ENCODE measurements at regions of chr5 and their contacts with region 1.

Region 1: GRCh38 chr5:78509884-78510769 is 138.4 kb downstream of the LHFPL2 start:
- DNase-seq: peak; percentile 43 to 68
- ATAC-seq: peak; percentile 70 to 73
- H3K4me3 ChIP-seq: peak overlapping the region; percentile 53 to 65 (median 54)
- H3K27ac ChIP-seq: peak overlapping the region; percentile 42 to 72 (median 56)
- H3K4me1 ChIP-seq: peaks cover 26 to 34% of the 10 kb centered on the region in 2 donors
- H3K27me3 ChIP-seq: no peaks in the 10 kb centered on the region
- CTCF ChIP-seq: peak in 1 of 5 experiments; percentile 19
- POLR2A ChIP-seq: peak; percentile 16

Region 2: DNA sequence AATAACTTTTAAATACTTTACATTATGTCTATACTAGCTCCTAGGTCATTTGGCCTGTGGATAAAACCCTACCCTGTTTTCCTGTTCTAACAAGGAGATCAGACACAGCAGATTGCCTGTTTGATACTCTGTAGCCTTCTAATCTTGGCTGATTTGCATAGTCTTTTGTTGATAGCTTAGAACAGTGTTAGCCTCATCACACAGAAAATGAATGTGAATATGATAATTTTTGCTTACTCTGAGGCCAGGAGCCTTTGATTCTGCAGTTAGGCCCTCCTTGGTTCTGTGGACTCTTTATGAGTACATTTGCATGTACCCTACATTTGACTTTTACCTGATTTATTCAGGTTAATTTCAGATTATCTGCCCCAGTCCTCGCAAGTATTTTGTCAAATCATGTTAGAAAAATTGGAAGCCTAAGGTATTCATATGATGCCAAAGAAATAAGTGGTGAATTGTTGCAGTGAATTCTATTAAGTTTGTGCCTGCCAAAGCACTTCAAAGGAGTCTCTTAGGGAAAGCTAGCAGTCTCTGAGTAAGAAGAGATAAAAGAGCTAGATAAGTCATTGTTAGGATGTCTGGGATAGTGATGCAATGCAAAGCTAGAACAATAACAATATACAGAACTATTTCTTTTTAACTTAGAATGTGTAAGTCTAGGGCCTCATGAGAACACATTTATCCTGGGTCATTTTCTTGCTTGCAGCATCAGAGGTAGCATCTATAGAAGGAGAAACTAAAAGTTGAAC is 93.3 kb before region 1 on chr5:
- in situ Hi-C with region 1: no loop called
- intact Hi-C with region 1: no loop called
- DNase-seq: no peak
- ATAC-seq: no peak
- H3K4me3 ChIP-seq: no peak overlapping the region
- H3K27ac ChIP-seq: no peak overlapping the region
- H3K4me1 ChIP-seq: peaks cover 12 to 15% of the 10 kb centered on the region in 2 donors
- H3K27me3 ChIP-seq: no peaks in the 10 kb centered on the region
- CTCF ChIP-seq: no peak
- POLR2A ChIP-seq: no peak

Region 3: DNA sequence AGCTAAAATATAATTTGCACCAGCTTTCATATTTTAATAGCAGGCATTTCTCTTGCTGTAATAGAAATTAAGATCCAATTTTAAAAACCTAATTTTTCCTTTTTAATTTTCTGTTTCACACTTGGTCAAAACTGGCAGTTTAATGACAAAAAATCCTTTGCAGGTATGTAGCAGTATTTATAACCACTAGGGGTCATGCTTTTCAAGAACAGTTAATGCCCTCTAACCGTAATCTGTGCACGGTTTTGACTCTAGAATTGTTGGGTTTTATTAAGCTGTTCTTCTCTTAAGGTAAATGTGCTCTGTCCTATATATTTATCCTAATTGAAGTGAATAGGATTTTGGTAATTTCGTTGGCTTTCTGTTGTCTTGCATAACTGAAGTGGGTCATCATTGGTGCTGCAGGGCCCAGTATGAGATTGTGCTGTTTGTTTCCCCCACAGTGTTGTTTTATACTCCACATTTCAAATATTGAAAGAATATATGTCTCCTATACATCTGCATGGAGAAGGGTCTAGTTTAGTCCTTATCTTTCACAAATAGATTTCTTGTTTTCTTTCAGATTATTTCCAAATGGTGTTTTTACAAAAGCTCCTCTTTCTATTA is 42.3 kb before region 1 on chr5:
- in situ Hi-C with region 1: no loop called
- intact Hi-C with region 1: loop called (anchors 5 kb)
- DNase-seq: no peak
- ATAC-seq: peak in 1 of 2 donors; percentile 66
- H3K4me3 ChIP-seq: no peak overlapping the region
- H3K27ac ChIP-seq: no peak overlapping the region
- H3K4me1 ChIP-seq: no peaks in the 10 kb centered on the region
- H3K27me3 ChIP-seq: no peaks in the 10 kb centered on the region
- CTCF ChIP-seq: peak; percentile 55 to 78 (median 67)
- POLR2A ChIP-seq: no peak

Region 4: GRCh38 chr5:79456890-79457583 is 946.9 kb after region 1 on chr5:
- in situ Hi-C with region 1: no loop called
- intact Hi-C with region 1: no loop called
- DNase-seq: no peak
- ATAC-seq: no peak
- H3K4me3 ChIP-seq: no peak overlapping the region
- H3K27ac ChIP-seq: no peak overlapping the region
- H3K4me1 ChIP-seq: no peaks in the 10 kb centered on the region
- H3K27me3 ChIP-seq: no peaks in the 10 kb centered on the region
- CTCF ChIP-seq: no peak
- POLR2A ChIP-seq: no peak

Measured in gastrocnemius medialis (tissue), 4 donors.